Posterior vena cava (tissue), 2 donors: ENCODE measurements at regions of chr13 and their contacts with region 1.

Region 1: DNA sequence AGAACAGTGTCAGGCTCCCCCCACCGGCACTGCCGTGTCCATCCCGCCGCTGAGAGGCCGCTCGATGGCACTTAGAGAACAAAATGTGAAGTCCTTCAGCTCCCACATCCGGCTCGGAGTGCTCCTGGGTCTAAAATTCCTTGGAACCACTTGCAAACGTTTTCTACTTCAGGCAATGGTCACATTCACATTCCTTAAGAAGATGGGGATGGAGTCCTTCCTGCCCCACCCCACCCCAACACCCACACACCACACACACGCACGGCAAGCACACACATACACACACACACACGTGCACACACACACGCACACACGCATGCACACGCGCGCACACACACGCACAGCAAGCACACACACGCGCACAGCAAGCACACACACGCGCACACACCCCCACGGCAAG is 83.4 kb downstream of the SOX1 start:
- DNase-seq: no peak

Region 2: GRCh38 chr13:111792956-111793355 is 357.4 kb before region 1 on chr13:
- intact Hi-C with region 1: no loop called
- DNase-seq: peak; percentile 48

Region 3: GRCh38 chr13:111967572-111968201 is 182.7 kb before region 1 on chr13:
- intact Hi-C with region 1: loop called in 1 of 2 experiments (anchors 5 kb)
- DNase-seq: no peak